B cell (primary cell): ENCODE measurements at regions of chr1 and their contacts with region 1.

Region 1: DNA sequence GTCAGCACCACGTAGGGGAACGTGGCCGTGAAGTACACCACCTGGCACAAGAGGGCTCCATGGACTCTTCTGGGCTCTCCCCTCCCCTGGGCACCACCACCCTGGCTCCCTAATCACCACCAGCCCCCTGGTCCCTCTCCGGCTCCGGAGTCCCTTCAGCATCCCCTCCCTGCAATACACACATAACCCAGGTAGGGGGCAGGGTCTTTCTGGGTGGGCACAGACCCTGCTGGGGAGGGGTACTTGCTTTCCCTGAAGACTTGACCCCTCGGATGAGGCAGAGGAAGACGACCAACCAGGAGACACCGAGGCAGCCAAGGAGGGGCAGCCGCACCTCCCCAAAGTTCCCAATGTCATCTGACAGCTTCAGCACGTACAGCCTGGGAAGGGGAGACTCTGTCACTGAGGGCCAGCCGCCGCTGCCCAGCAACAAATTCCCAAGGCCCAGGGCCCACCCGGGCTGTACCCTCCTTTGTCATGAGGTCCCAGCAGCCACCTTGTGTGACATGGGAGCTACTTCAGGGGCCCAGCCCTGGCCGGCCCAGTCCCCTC is 11.3 kb downstream of the CCDC24 start:
- DNase-seq: no peak
- ATAC-seq: no peak
- H3K4me3 ChIP-seq: no peak overlapping the region
- H3K4me3 Mint-ChIP-seq: no peak overlapping the region
- H3K27ac ChIP-seq: no peak overlapping the region
- H3K27ac Mint-ChIP-seq: no peak overlapping the region
- H3K4me1 ChIP-seq: no peaks in the 10 kb centered on the region
- H3K4me1 Mint-ChIP-seq: no peaks in the 10 kb centered on the region
- H3K27me3 ChIP-seq: no peaks in the 10 kb centered on the region
- H3K27me3 Mint-ChIP-seq: no peaks in the 10 kb centered on the region
- CTCF ChIP-seq: peak; percentile 18

Region 2: GRCh38 chr1:43991476-43992231 is 11.0 kb before region 1 on chr1 and contains the start of gene CCDC24:
- CTCF ChIA-PET with region 1: interaction called, 32 read pairs
- POLR2A ChIA-PET with region 1: no interaction called
- intact Hi-C with region 1: no loop called
- DNase-seq: peak; percentile 84
- ATAC-seq: peak; percentile 89
- H3K4me3 ChIP-seq: peak within 1 kb of the TSS; percentile 11 to 81 (median 72)
- H3K4me3 Mint-ChIP-seq: peak within 1 kb of the TSS; percentile 96
- H3K27ac ChIP-seq: peak within 1 kb of the TSS in 1 of 2 donors; percentile 75
- H3K27ac Mint-ChIP-seq: peak within 1 kb of the TSS; percentile 91
- H3K4me1 ChIP-seq: peaks cover 22 to 44% of the 10 kb centered on the region in 2 donors
- H3K4me1 Mint-ChIP-seq: peaks cover 38% of the 10 kb centered on the region
- H3K27me3 ChIP-seq: no peaks in the 10 kb centered on the region
- H3K27me3 Mint-ChIP-seq: no peaks in the 10 kb centered on the region
- CTCF ChIP-seq: no peak
- total RNA-seq, gene CCDC24: 18.0 and 18.4 TPM in 2 replicates

Region 3: DNA sequence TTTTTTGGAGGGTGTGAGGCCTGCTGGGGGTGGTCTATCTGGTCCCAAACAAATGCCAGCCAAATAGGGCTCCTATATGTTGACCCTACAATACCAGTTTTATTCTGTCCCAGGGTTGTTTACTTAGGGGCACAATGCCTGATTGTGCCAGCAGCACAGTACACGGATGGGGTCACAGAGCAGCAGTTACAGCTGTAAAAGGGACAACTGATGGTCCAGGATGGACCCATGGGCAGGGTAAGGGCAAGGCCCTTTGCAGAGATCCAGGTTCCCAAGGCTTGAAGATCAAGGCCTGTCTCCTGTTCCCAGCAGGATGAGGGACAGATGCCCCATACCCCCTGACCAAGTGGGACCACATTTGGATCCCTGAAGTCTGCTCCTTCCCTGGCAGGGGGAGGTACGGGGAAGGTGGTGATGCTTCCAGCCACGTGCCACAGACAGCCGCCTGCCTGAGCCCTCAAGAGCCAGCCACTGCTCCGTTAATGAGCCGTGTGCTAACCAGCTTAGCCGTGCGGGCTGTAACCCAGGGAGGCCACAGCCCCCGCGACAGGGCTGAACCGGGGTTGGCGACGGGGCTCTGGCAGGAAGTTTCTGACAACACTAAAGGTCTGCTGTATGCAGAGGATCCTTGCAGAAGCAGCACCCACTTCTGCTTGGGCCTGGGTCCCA is 10.4 kb after region 1 on chr1:
- CTCF ChIA-PET with region 1: interaction called, 21 read pairs
- POLR2A ChIA-PET with region 1: no interaction called
- intact Hi-C with region 1: no loop called
- DNase-seq: no peak
- ATAC-seq: no peak
- H3K4me3 ChIP-seq: no peak overlapping the region
- H3K4me3 Mint-ChIP-seq: no peak overlapping the region
- H3K27ac ChIP-seq: no peak overlapping the region
- H3K27ac Mint-ChIP-seq: no peak overlapping the region
- H3K4me1 ChIP-seq: no peaks in the 10 kb centered on the region
- H3K4me1 Mint-ChIP-seq: no peaks in the 10 kb centered on the region
- H3K27me3 ChIP-seq: no peaks in the 10 kb centered on the region
- H3K27me3 Mint-ChIP-seq: peaks cover 9% of the 10 kb centered on the region
- CTCF ChIP-seq: no peak

Region 4: DNA sequence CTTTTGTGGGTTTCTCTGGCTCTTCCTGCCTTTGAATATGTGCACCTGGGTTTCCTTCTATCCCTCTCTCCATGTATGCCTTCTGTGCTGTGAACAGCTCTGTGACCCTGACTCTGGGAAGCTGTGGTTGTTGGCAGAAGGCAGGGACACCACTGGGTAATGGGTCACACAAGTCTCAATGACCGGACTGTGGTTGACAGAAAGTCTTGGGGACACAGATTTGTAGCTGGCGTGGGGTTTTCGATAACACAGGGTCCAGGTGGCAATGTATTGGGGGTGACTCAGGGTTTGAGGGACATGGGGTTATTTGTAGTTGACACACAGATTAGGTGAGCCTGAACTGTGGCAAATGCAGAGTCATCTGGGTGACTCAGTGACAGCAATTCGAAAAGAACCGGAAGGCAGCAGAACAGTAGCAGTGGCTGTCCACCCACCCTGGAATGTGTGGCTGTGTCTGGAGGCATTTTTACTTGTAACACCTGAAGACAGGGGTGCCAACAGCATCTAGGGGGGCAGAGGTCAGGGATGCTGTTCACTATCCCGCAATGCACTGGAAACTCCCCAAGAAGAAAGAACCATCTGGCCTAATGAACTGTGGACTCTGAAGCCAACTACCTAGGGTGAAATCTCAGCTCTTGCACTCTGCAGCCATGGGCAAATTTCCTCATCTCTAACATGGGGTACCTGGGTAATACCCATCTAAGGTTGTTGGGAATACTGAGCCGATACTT is 41.6 kb after region 1 on chr1:
- CTCF ChIA-PET with region 1: interaction called, 89 read pairs
- POLR2A ChIA-PET with region 1: no interaction called
- intact Hi-C with region 1: loop called (anchors 1 kb)
- DNase-seq: no peak
- ATAC-seq: no peak
- H3K4me3 ChIP-seq: no peak overlapping the region
- H3K4me3 Mint-ChIP-seq: no peak overlapping the region
- H3K27ac ChIP-seq: no peak overlapping the region
- H3K27ac Mint-ChIP-seq: no peak overlapping the region
- H3K4me1 ChIP-seq: peaks cover 0 to 3% of the 10 kb centered on the region in 2 donors
- H3K4me1 Mint-ChIP-seq: peaks cover 6% of the 10 kb centered on the region
- H3K27me3 ChIP-seq: peaks cover 0 to 11% (median 0%) of the 10 kb centered on the region in 4 experiments
- H3K27me3 Mint-ChIP-seq: peaks cover 22% of the 10 kb centered on the region
- CTCF ChIP-seq: no peak

Region 5: DNA sequence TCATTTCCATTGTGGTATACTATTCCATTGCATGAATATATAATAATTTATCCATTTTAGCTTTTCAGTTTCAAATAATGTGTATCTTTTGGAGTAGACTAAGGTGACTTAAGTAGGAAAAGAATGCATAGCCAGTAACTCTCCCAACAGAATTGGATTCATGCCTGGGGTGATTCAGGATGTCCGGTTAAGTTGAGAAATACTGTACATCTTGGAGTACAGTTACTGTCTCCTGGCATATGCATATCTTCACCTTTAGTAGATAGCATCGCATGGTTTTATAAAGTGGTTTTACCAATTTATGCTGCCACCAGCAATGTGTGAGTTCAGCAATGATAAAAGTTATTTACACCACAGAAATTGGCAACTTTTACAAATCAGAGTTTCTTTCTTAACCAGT is 47.2 kb after region 1 on chr1:
- CTCF ChIA-PET with region 1: interaction called, 89 read pairs
- POLR2A ChIA-PET with region 1: no interaction called
- intact Hi-C with region 1: loop called (anchors 1 kb)
- DNase-seq: no peak
- ATAC-seq: no peak
- H3K4me3 ChIP-seq: no peak overlapping the region
- H3K4me3 Mint-ChIP-seq: no peak overlapping the region
- H3K27ac ChIP-seq: no peak overlapping the region
- H3K27ac Mint-ChIP-seq: no peak overlapping the region
- H3K4me1 ChIP-seq: peaks cover 0 to 3% of the 10 kb centered on the region in 2 donors
- H3K4me1 Mint-ChIP-seq: peaks cover 6% of the 10 kb centered on the region
- H3K27me3 ChIP-seq: peaks cover 0 to 7% (median 0%) of the 10 kb centered on the region in 4 experiments
- H3K27me3 Mint-ChIP-seq: peaks cover 18% of the 10 kb centered on the region
- CTCF ChIP-seq: no peak